Activated T-helper 1 cell treated with anti-CD3 and anti-CD28 coated beads, Interleukin-12 subunit alpha, Interleukin-12 subunit beta, Interleukin-2, Interleukin-4 antibody, amounts not matched to agents 30 ng/mL and 10 ng/mL and 1 ng/mL, durations not matched to agents 14 hours and 24 hours and 36 hours (primary cell): ENCODE measurements at regions of chr13 and their contacts with region 1.

Region 1: GRCh38 chr13:40994581-40995189 is 24.4 kb downstream of the ELF1 start:
- DNase-seq: no peak
- H3K4me3 Mint-ChIP-seq: peak overlapping the region; percentile 73
- H3K27ac Mint-ChIP-seq: peak overlapping the region; percentile 79
- H3K4me1 Mint-ChIP-seq: peaks cover 85% of the 10 kb centered on the region
- H3K27me3 Mint-ChIP-seq: no peaks in the 10 kb centered on the region

Region 2: DNA sequence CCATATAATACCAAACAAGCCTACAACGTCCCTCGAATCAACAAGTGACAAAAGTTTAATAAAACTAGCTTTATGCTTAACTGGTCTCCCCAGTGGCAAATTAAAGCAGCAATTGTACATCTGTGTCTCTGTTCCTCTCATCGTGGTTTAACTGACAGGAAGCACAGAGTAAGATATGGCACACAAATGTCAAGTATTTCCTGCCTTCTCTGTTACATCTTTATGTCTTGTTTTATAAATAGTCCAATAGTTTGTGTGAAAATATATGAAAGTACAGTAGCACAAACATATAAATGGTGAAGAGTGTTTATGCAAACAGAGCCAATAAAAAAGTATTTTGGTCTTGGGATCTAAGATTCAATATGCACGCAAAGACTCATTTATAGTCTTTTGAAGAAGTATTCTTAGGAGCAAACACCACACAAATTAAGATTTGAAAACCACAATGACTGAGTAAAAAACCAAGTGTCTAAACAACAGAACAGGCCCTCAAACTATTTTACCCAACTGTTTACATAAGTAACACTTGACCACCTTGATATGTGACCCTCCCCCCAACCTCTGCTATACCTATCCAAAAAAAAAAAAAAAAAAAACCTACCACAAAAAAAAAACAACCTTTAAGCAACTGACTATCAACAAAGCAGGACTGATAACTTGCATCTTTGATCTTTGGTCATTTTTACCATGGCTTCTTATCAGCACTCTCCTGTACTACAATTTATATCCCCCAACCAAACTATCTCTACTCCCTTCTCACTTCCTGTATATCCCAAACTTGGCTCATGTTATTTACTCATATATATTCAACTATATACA is 10.4 kb after region 1 on chr13:
- intact Hi-C with region 1: loop called (anchors 1 kb)
- DNase-seq: no peak
- H3K4me3 Mint-ChIP-seq: peak overlapping the region; percentile 59
- H3K27ac Mint-ChIP-seq: peak overlapping the region; percentile 88
- H3K4me1 Mint-ChIP-seq: peaks cover 66% of the 10 kb centered on the region
- H3K27me3 Mint-ChIP-seq: no peaks in the 10 kb centered on the region